Aorta (tissue), 5 donors: ENCODE measurements at regions of chr16 and their contacts with region 1.

Region 1: GRCh38 chr16:46689365-46690280 is at the start of gene ORC6:
- DNase-seq: peak; percentile 99
- ATAC-seq: peak; percentile 97
- H3K4me3 ChIP-seq: peak within 1 kb of the TSS; percentile 64 to 85
- H3K27ac ChIP-seq: peak within 1 kb of the TSS in 1 of 2 donors; percentile 96
- H3K4me1 ChIP-seq: peaks cover 0 to 2% of the 10 kb centered on the region in 2 donors
- H3K27me3 ChIP-seq: no peaks in the 10 kb centered on the region
- total RNA-seq, gene ORC6: 1.6 TPM

Region 2: DNA sequence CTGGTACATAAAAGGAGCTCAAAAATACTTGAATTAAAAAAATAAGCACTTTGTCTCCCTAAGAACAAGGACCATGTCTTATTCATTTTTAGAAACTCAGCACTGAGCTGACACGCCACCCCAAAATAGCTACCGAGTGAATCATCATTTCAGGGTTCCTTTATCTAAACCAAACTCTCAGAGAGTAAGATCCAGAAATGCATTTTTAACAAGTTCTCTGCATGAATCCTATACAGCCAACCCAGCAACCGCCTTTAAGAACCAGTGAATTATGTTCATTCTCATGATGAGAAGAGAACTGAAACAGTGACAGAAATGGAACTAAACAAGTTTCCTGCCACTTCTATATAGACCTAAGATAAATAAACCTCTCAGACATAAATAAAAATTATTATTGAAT is 132.6 kb after region 1 on chr16:
- intact Hi-C with region 1: loop called in 1 of 2 experiments (anchors 10 kb)
- DNase-seq: no peak
- ATAC-seq: no peak
- H3K4me3 ChIP-seq: no peak overlapping the region
- H3K27ac ChIP-seq: no peak overlapping the region
- H3K4me1 ChIP-seq: no peaks in the 10 kb centered on the region
- H3K27me3 ChIP-seq: no peaks in the 10 kb centered on the region

Region 3: GRCh38 chr16:46862555-46863447 is 173.2 kb after region 1 on chr16:
- intact Hi-C with region 1: no loop called
- DNase-seq: no peak
- ATAC-seq: no peak
- H3K4me3 ChIP-seq: no peak overlapping the region
- H3K27ac ChIP-seq: no peak overlapping the region
- H3K4me1 ChIP-seq: no peaks in the 10 kb centered on the region
- H3K27me3 ChIP-seq: no peaks in the 10 kb centered on the region

Region 4: DNA sequence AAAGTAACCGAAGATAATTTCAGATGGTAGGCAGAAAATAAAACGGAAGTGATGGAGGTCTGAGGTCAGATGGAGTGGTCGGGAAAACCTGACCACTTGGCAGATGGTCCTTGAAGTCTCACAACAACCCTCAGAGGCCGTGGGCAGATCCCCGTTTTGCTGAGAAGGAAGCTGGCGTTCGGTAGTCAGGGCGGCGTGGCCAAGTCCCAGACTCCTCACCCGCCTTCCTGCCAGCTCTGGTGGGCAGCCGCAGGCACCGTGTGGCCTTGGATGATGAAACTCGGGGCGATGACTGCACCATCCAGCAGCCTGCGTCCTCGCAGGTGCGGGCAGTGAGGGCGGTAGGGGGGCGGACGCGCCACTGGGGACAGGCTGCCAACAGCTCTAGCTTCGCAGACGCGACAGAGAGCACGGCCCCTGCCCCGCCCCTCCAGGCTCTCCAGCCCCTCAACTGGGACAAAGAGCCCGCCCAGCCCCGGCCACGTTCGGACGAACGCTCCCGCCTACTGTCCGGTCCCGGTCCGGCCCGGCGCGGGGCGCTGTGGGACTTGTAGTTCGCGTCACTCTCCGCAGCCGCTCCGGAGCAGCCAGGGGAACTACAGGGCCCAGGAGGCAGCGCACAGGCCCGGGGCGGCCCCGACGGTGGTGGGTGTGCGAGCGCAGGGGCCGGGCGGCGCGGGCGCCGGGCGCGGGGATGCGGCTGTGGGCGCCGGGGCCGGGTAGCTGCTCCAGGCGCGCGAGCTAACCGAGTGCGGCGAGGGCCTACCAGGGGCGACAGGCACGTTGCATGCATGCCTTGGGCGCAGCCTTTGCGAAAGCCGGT is 194.3 kb after region 1 on chr16 and contains the start of gene GPT2:
- intact Hi-C with region 1: loop called (anchors 5 to 10 kb)
- DNase-seq: peak; percentile 98 to 100
- ATAC-seq: peak; percentile 99
- H3K4me3 ChIP-seq: peak within 1 kb of the TSS; percentile 69 to 78
- H3K27ac ChIP-seq: no peak within 1 kb of the TSS
- H3K4me1 ChIP-seq: no peaks in the 10 kb centered on the region
- H3K27me3 ChIP-seq: no peaks in the 10 kb centered on the region
- total RNA-seq, gene GPT2: 1.8 to 5.1 TPM